Endothelial cell of umbilical vein (primary cell): ENCODE measurements at regions of chr17 and their contacts with region 1.

Region 1: DNA sequence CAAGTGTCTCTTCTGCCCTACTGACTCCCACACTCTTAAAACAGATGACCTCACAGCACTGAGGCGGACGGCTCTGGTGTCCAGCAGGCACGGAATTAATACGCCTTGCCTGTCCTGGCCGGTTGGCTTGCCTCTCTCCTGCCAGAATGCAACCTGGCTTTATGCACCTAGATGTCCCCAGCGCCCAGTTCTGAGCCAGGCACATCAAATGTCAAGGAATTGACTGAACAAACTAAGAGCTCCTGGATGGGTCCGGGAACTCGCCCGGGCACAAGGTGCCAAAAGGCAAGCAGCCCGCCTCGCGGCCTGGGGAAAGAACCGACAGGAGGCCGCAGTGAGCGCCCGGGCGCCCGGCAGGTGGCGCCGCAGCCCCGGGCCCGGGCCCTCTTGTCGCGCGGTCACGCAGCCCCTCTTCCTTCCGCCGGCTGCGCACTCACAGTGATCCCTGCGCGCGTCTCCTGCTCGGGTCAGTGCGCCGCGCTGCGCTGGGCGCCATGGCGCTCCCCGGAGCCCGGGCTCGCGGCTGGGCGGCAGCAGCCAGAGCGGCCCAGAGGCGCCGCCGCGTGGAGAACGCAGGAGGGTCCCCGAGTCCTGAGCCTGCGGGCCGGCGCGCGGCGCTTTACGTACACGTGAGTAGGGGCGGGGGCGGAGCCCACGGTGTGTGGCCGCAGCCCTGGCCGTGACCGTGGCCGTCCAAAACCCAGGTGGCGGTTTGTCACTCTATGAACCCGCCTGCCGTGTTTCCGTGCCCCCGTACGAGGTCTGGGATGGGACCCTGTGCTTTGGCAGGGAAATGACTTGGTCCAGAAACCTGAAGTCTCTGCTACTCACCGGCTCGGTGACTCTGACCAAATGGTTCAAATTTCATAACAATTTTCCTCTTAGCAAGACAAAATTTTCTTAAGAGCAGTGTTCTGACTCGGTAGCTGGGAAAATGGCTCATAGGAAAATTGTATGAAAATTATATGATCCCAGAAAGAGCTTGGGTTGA is at the start of gene RSAD1:
- DNase-seq: peak; percentile 88
- H3K4me3 ChIP-seq: peak within 1 kb of the TSS; percentile 58 to 85 (median 79)
- H3K27ac ChIP-seq: peak within 1 kb of the TSS; percentile 39
- H3K4me1 ChIP-seq: peaks cover 20% of the 10 kb centered on the region
- H3K27me3 ChIP-seq: peaks cover 7 to 17% of the 10 kb centered on the region in 2 experiments
- CTCF ChIP-seq: peak; percentile 77 to 88
- POLR2A ChIP-seq: peak; percentile 94
- total RNA-seq, gene RSAD1: 33.1 and 35.5 TPM in 2 replicates

Region 2: GRCh38 chr17:50361561-50362480 is 116.9 kb before region 1 on chr17:
- CTCF ChIA-PET with region 1: interaction called, 30 read pairs
- POLR2A ChIA-PET with region 1: no interaction called
- dilution Hi-C with region 1: no loop called
- intact Hi-C with region 1: loop called (anchors 1 kb)
- DNase-seq: peak; percentile 61
- H3K4me3 ChIP-seq: no peak overlapping the region
- H3K27ac ChIP-seq: no peak overlapping the region
- H3K4me1 ChIP-seq: no peaks in the 10 kb centered on the region
- H3K27me3 ChIP-seq: no peaks in the 10 kb centered on the region
- CTCF ChIP-seq: peak; percentile 77 to 84
- POLR2A ChIP-seq: no peak

Region 3: DNA sequence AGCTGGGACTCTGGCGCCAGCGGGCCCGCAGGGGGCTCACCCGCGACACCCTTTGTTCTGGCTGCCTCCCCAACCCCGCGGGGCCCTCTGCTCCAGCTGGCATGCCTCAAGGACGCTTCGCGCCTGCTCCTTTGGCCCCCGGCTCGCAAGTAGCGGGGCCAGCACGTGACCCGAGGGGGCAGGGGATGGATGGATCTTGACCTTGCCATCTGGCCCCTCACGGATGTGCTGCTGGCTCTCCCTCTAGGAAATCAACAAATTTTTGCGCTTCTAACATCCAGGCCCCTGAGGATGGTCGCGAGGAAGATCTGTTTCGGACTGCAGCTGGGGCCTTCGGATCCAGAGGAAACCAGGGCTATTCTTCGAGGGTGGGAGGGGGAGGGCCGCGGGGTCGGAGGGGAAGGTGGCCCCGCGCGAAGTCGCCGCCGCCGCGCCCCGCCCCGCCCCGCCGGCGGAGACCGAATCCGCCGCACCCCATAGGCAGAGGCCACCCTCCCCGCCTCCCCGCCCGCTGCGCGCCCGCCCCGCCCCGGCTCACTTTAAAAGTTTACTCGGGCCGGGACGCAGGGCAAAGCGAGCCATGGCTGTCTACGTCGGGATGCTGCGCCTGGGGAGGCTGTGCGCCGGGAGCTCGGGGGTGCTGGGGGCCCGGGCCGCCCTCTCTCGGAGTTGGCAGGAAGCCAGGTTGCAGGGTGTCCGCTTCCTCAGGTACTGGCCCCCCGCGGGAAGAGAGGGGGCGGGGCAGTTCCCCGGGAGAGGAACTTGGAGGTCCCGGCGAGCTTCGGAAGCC is 52.8 kb before region 1 on chr17 and contains the start of gene ACSF2:
- CTCF ChIA-PET with region 1: interaction called, 7 read pairs
- POLR2A ChIA-PET with region 1: no interaction called
- dilution Hi-C with region 1: no loop called
- intact Hi-C with region 1: loop called (anchors 2 kb)
- DNase-seq: peak; percentile 42
- H3K4me3 ChIP-seq: peak within 1 kb of the TSS; percentile 43 to 79 (median 72)
- H3K27ac ChIP-seq: peak within 1 kb of the TSS; percentile 63
- H3K4me1 ChIP-seq: peaks cover 41% of the 10 kb centered on the region
- H3K27me3 ChIP-seq: no peaks in the 10 kb centered on the region
- CTCF ChIP-seq: no peak
- POLR2A ChIP-seq: peak; percentile 67
- total RNA-seq, gene ACSF2: 24.6 and 37.2 TPM in 2 replicates

Region 4: DNA sequence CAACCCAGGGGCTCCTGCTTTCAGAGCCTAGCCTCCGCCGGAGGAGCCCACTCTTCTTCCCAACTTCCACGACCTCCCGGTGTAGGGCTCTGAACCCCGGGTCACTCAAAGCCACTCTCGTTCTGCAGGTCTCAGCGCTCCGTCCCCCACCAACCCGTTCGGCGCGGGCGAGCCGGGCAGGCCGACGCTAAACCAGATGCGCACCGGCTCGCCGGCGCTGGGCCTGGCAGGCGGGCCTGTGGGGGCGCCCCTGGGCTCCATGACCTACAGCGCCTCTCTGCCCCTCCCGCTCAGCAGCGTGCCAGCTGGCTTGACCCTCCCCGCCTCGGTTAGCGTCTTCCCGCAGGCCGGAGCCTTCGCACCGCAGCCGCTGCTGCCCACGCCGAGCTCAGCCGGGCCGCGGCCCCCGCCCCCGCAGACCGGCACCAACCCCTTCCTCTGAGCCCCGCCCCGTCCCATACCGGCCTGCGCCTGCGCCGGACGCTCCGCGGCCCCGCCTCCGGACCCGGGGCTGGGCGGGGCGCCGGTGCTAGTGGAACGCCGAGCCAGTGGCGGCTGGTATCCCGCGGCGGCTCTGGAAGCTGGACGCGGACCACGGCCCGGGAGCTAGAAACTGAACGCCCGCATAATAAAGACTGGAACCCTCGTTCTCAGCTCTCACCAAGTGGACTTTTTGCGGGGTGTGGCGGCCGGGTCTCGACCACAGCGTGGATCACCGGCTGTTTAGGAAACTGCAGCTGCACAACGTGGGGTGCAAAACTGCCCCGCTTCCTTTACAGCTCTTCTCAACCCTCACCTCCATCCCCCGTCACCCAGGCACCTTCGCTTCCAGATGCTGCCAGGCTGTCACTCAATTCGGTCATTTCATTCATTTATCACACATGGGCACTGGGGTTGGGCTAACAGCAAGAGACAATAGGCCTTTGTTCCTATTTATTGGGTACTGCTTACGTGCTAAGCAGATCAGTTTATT is 63.3 kb after region 1 on chr17:
- CTCF ChIA-PET with region 1: interaction called, 12 read pairs
- POLR2A ChIA-PET with region 1: no interaction called
- dilution Hi-C with region 1: no loop called
- intact Hi-C with region 1: loop called (anchors 1 kb)
- DNase-seq: peak; percentile 87
- H3K4me3 ChIP-seq: peak overlapping the region; percentile 45 to 62 (median 46)
- H3K27ac ChIP-seq: no peak overlapping the region
- H3K4me1 ChIP-seq: peaks cover 10% of the 10 kb centered on the region
- H3K27me3 ChIP-seq: no peaks in the 10 kb centered on the region
- CTCF ChIP-seq: peak; percentile 10 to 50
- POLR2A ChIP-seq: peak; percentile 81

Region 5: DNA sequence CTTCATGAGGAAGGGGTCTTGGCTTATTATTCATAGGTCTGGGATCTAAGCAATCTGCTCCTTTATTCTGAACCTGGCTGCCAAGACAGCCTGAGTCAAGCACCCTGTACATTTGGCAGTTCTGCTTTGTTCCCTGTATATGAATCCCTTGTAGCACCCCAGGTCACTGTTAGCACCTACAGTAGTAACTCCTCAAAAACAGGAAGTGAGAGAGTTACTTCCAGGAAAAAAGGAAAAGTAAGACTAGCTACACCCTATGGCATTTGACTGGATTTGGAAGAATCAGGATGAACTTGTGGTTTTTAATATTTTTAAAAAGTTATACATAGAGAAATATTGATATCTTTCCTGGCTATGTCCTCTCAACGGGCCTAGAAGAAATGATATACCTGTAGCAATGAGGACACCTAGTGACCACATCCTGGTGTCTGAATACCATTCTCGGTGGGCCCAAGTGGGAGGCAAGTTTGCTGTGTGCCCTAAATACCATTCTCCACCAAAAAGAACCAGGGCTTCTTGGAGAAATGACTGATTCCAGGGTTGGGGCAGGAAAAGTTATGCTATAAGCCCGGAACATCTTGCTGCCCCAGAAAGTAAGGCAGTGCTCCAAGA is 219.1 kb after region 1 on chr17:
- CTCF ChIA-PET with region 1: interaction called, 3 read pairs
- POLR2A ChIA-PET with region 1: no interaction called
- dilution Hi-C with region 1: no loop called
- intact Hi-C with region 1: loop called (anchors 5 kb)
- DNase-seq: no peak
- H3K4me3 ChIP-seq: no peak overlapping the region
- H3K27ac ChIP-seq: no peak overlapping the region
- H3K4me1 ChIP-seq: no peaks in the 10 kb centered on the region
- H3K27me3 ChIP-seq: no peaks in the 10 kb centered on the region
- CTCF ChIP-seq: no peak
- POLR2A ChIP-seq: no peak